ENCODE measurements at regions of chr6 and their contacts with region 1.

Region 1: DNA sequence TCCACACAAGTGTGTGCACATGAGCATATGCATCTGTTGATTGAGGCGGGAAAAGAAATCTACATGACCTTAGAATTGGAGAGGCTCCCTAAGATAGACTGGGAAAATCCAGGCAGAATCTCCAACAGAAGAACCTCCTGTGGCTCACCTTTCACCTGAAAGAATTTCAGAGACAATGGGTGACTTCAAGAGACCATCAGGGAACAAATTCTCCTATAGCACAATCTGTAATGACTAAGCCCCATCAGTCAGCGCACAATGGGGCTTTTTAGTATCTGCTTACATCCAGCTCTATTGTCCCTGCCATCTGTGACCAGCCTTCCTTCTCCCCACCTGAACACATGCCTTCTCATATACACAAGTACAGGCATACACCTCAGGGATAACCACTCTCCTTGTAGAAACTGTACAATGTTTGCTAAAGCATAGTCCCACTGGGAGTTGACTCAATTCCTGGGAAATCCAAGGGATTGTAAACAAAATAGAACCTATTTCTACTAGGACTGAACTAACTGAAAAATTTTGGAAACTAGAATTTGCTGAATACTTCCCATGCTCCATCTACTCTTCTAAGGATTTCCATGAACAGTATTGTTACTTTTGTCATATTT is 150.8 kb upstream of the STXBP5 start:
- DNase-seq: no peak

Region 2: DNA sequence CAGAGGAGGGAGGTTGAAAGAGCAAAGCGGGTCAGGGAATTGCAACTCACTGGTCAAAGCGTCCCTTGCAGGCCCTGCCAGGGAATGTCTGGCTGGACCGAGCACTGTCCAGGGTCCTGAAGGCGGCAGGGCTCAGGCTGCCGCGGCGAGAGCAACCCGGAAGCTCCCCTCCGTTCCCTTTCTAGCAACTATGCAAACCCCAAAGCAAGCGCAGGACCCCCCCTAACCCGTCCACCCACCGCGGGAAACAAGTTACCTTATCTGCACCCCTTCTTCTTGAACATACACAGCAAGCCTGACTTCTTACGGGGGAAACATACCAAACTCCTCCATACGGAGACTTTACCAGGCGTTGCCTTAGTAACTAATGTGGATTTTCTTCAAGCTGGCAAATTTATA is 1025.1 kb before region 1 on chr6:
- intact Hi-C with region 1: loop called in 1 of 2 experiments (anchors 5 kb)
- DNase-seq: peak; percentile 89

Region 3: GRCh38 chr6:147131532-147132128 is 78.2 kb after region 1 on chr6:
- intact Hi-C with region 1: no loop called
- DNase-seq: no peak

Region 4: DNA sequence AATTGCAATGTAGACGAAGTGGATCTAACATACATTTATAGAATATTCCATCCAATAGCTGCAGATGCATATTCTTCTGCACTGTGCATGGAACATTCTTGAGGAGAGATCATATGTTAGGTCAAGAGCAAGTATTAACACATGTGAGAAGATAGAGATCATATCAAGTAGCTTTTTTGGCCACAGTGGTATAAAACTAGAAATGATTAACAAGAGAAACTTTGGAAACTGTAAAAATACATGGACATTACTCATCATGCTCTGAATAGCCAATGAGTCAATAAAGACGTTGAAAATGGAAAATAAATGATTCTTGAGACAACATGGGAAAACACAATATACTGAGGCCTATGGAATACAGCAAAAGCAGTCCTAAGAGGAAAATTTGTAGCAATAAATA is 245.0 kb after region 1 on chr6:
- intact Hi-C with region 1: no loop called
- DNase-seq: no peak